Sciatic nerve (tissue), 2 donors: ENCODE measurements at regions of chr20 and their contacts with region 1.

Region 1: GRCh38 chr20:38926142-38926933 is at the start of gene FAM83D:
- DNase-seq: peak; percentile 90
- ATAC-seq: peak; percentile 98
- total RNA-seq, gene FAM83D: 0.13 TPM

Region 2: GRCh38 chr20:39021748-39022147 is 95.4 kb after region 1 on chr20:
- intact Hi-C with region 1: no loop called
- DNase-seq: no peak
- ATAC-seq: no peak

Region 3: DNA sequence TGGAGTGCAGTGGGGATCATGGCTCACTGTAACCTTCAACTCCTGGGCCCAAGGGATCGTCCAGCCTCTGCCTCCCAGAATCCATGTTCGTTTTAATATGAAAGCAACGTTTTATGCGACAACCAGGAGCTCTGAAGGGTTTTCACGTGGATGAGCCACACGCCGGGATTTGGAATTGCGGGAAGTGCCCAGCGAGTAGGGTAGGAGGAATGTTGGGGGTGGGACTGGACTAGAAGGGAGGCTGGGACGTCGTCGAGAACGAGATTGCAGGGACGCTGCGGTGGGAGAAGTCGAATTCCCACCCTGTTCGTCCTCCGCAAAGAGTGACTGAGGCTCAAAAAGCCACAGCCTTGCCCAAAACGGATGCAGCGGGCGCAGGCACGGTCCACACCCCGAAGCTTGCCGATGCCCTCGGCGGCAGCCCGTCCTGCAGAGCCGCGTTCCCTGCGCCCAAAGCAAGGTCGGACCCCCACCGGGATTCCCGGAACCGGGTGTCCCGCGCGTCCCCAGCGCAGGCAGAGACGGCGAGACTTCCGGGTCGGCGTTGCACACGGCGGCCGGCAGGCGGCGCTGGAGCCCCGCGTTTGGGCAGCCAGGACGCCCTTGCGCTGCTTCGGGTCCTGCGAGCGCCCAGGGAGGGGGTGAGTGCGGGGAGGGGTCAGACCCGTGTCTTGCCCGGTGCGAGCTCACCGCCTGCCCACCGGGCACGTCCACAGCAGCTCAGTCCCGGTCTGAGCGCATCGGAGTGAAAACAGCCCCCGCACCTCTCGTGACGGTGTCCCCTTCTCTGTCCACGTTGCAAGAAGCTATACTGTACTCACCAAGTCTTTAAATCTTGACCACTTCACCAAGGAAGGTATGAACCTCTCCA is 123.6 kb after region 1 on chr20:
- intact Hi-C with region 1: loop called (anchors 10 kb)
- DNase-seq: peak; percentile 85
- ATAC-seq: peak; percentile 89